Dendritic cell treated with granulocyte-macrophage colony-stimulating factor and Interleukin-4, amounts not matched to agents 40 ng/mL and 50 ng/mL, for 4 days (primary cell): ENCODE measurements at regions of chr12 and their contacts with region 1.

Region 1: DNA sequence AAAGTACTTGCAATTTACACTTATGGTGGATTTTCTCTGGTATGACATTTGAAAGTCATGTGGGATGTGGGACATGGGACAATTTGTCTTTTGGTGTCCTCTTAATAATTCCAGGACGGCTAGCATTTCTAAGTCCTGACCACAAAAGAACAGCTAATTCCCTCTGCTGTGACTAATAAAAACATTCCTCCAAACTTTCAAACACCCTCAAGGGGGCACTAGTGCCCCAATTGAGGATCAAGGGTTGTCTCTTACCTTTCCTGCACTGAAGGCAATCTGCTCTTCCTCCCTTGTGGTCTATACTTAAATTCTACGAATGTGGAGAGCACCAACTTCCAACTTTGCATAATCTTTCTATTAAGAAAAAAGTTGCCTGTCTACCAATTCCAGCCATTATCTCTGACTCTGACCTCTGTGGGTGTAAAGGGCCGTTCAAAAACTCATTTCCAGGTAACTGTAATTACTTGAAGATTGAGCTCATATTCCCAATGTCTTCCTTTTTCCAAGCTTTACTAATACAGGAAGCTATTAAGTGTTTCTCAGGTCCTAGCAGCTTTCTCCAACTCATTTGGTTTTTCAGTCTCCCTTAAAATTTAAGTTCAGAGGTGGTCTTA is 210.2 kb downstream of the PTPRO start:
- H3K4me3 Mint-ChIP-seq: no peak overlapping the region
- H3K27ac Mint-ChIP-seq: no peak overlapping the region
- H3K4me1 Mint-ChIP-seq: peaks cover 13% of the 10 kb centered on the region
- H3K27me3 Mint-ChIP-seq: no peaks in the 10 kb centered on the region

Region 2: GRCh38 chr12:15268927-15269552 is 263.4 kb before region 1 on chr12:
- intact Hi-C with region 1: no loop called
- H3K4me3 Mint-ChIP-seq: no peak overlapping the region
- H3K27ac Mint-ChIP-seq: no peak overlapping the region
- H3K4me1 Mint-ChIP-seq: no peaks in the 10 kb centered on the region
- H3K27me3 Mint-ChIP-seq: peaks cover 4% of the 10 kb centered on the region

Region 3: GRCh38 chr12:15544589-15544988 is 12.1 kb after region 1 on chr12:
- intact Hi-C with region 1: loop called (anchors 1 kb)
- H3K4me3 Mint-ChIP-seq: peak overlapping the region; percentile 45
- H3K27ac Mint-ChIP-seq: peak overlapping the region; percentile 90
- H3K4me1 Mint-ChIP-seq: peaks cover 44% of the 10 kb centered on the region
- H3K27me3 Mint-ChIP-seq: no peaks in the 10 kb centered on the region

Region 4: DNA sequence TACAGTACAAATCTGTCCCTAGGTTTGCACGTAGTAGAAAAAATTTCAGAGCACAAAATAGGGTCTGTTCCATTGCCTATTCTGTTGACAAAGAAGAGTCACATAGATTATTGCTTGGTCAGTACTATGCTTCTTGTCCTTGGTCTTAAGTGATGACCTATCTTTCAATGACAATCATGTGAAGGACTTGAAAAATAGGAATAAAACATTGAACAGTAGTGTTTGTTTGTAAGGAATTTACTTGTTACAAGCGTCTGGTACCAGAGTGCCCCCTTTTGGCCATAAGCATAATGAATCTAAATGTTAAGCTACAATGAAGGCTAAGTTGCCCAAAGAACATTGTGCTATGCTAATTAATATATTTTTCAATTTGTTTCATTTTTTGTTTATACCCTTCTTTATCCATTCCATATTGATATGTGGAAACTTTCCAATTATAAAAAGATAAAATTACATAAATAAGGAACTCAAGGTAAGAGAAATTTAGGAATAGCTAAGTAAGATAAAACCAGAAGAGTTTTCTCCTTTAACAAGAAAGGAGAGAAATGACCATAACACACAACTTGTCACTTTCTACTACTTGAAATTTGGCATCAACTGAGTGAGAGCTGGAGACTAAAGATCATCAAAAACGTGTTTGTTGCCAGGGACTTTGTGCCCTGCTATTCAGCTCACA is 52.0 kb after region 1 on chr12:
- intact Hi-C with region 1: loop called (anchors 1 kb)
- H3K4me3 Mint-ChIP-seq: no peak overlapping the region
- H3K27ac Mint-ChIP-seq: no peak overlapping the region
- H3K4me1 Mint-ChIP-seq: no peaks in the 10 kb centered on the region
- H3K27me3 Mint-ChIP-seq: no peaks in the 10 kb centered on the region